Activated CD4-positive, alpha-beta memory T cell treated with anti-CD3 and anti-CD28 coated beads, Interleukin-2, amount 10 ng/mL, durations not matched to agents 7 days and 5 days (primary cell): ENCODE measurements at regions of chr22 and their contacts with region 1.

Region 1: DNA sequence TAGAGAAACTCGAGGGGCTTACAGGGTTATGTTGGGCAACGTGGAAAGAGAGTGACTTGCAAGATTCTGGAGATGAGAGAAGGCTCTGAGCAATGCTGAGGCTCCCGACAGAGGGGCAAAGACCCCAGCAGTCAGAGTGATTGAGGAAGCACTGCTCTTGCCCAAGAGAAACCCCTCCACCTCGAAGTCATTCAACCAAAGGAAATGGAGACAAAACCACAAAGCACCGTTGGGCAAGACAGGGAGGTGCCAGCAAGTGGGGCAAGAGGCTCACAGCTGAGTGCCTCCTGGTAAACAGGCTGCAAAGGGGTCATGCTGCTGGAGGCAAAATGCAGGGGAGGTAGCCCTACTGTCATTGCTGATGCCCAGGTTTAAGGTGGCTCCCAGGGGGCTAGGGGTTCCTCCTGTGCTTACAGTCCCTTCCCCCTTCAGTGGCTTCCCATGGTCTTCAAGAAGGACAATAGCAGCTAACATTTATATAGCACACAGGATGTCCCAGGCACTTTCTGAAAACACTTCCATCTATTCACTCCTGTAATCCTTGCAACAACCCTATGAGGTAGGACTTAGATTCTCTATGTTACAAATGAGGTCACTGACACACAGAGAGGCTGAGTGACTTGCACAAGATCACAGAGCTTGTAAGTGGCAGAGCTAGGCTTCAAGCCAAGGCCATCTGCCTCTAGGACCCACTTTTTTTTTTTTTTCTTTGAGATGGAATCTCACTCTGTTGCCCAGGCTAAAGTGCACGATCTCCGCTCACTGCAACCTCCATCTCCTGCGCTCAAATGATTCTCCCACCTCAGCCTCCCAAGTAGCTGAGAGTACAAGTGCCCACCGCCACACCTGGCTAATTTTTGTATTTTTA is 18.1 kb upstream of the MYH9 start:
- DNase-seq: peak; percentile 80
- H3K4me3 Mint-ChIP-seq: peak overlapping the region; percentile 22
- H3K27ac Mint-ChIP-seq: peak overlapping the region; percentile 99
- H3K4me1 Mint-ChIP-seq: peaks cover 68% of the 10 kb centered on the region
- H3K27me3 Mint-ChIP-seq: no peaks in the 10 kb centered on the region

Region 2: GRCh38 chr22:36244522-36245391 is 161.1 kb before region 1 on chr22:
- CTCF ChIA-PET with region 1: no interaction called
- POLR2A ChIA-PET with region 1: no interaction called
- DNase-seq: peak; percentile 4
- H3K4me3 Mint-ChIP-seq: no peak overlapping the region
- H3K27ac Mint-ChIP-seq: no peak overlapping the region
- H3K4me1 Mint-ChIP-seq: peaks cover 6% of the 10 kb centered on the region
- H3K27me3 Mint-ChIP-seq: peaks cover 3% of the 10 kb centered on the region

Region 3: GRCh38 chr22:36379593-36380361 is 26.1 kb before region 1 on chr22:
- CTCF ChIA-PET with region 1: interaction called, 3 read pairs
- POLR2A ChIA-PET with region 1: interaction called, 65 read pairs
- DNase-seq: peak; percentile 72
- H3K4me3 Mint-ChIP-seq: peak overlapping the region; percentile 75
- H3K27ac Mint-ChIP-seq: peak overlapping the region; percentile 98
- H3K4me1 Mint-ChIP-seq: peaks cover 96% of the 10 kb centered on the region
- H3K27me3 Mint-ChIP-seq: no peaks in the 10 kb centered on the region